MCF 10A (cell line): ENCODE measurements at regions of chr4 and their contacts with region 1.

Region 1: DNA sequence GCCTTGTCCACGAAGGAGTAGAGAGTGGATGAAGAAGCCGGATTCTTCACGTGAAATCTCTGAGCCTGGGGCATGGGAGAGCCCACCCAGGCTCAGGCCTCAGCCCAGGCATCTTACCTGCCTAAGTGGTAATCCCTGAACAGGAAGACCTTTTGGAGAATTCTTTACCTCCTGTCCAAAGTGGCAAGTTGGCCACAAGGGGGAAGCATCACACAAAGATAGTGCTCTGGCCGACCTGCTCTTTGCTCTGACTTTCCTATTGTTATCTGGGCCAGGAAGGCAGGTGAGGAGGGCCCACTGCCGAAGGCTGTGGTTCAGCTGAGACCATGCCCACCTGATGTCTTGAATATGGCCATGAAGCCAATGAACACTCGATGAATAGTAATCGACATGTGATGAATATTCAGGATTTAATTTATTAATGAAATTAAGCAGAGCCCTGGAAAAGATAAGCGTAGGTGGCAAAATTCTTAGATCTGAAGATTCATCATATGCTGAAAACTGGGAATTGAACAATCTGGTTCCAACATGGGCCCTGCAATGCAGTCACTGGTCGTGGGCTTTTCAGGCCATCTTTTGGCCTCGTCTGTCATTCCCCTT is 93.8 kb downstream of the PDGFRA start:
- DNase-seq: peak; percentile 85
- H3K4me3 Mint-ChIP-seq: no peak overlapping the region
- H3K27ac Mint-ChIP-seq: no peak overlapping the region
- H3K4me1 Mint-ChIP-seq: no peaks in the 10 kb centered on the region
- H3K27me3 Mint-ChIP-seq: no peaks in the 10 kb centered on the region
- CTCF ChIP-seq: peak; percentile 85

Region 2: DNA sequence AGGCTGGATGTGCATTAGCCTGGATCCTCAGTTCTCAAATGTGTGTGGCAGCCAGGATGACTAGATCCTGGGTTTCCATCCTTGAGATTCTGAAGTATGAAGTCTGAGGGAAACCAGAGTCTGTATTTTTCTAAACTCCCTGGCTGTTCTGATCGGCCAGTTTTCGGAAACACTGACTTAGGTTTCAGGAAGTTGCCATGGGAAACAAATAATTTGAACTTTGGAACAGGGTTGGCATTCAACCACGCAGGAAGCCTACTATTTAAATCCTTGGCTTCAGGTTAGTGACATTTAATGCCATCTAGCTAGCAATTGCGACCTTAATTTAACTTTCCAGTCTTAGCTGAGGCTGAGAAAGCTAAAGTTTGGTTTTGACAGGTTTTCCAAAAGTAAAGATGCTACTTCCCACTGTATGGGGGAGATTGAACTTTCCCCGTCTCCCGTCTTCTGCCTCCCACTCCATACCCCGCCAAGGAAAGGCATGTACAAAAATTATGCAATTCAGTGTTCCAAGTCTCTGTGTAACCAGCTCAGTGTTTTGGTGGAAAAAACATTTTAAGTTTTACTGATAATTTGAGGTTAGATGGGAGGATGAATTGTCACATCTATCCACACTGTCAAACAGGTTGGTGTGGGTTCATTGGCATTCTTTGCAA is 26.2 kb before region 1 on chr4:
- CTCF ChIA-PET with region 1: interaction called, 11 read pairs
- POLR2A ChIA-PET with region 1: no interaction called
- intact Hi-C with region 1: no loop called
- DNase-seq: no peak
- H3K4me3 Mint-ChIP-seq: no peak overlapping the region
- H3K27ac Mint-ChIP-seq: no peak overlapping the region
- H3K4me1 Mint-ChIP-seq: no peaks in the 10 kb centered on the region
- H3K27me3 Mint-ChIP-seq: no peaks in the 10 kb centered on the region
- CTCF ChIP-seq: no peak

Region 3: DNA sequence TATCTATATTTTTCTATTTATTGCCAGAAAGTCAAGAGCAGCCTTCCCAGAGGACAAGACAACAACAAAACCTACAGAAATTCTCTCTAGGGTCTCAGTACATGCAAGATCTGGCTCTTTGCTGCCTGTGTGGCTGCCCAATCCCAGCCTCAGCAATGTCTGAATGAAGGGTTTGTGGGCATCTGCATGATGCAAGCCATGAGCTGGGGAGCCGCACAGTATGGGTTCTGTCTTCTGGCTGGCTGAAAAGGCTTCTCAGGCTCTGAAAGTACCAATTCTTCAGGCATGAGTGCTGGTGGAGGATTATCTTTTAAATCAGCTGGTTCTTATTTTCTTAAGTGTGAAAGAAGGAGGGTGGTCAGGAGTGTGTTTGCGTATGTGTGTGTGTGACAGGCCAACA is 10.7 kb after region 1 on chr4:
- CTCF ChIA-PET with region 1: interaction called, 10 read pairs
- POLR2A ChIA-PET with region 1: no interaction called
- intact Hi-C with region 1: no loop called
- DNase-seq: no peak
- H3K4me3 Mint-ChIP-seq: no peak overlapping the region
- H3K27ac Mint-ChIP-seq: no peak overlapping the region
- H3K4me1 Mint-ChIP-seq: no peaks in the 10 kb centered on the region
- H3K27me3 Mint-ChIP-seq: no peaks in the 10 kb centered on the region
- CTCF ChIP-seq: no peak

Region 4: GRCh38 chr4:54683616-54684346 is 360.9 kb after region 1 on chr4:
- CTCF ChIA-PET with region 1: interaction called, 5 read pairs
- POLR2A ChIA-PET with region 1: no interaction called
- intact Hi-C with region 1: loop called (anchors 5 kb)
- DNase-seq: peak; percentile 72
- H3K4me3 Mint-ChIP-seq: no peak overlapping the region
- H3K27ac Mint-ChIP-seq: no peak overlapping the region
- H3K4me1 Mint-ChIP-seq: peaks cover 5% of the 10 kb centered on the region
- H3K27me3 Mint-ChIP-seq: no peaks in the 10 kb centered on the region
- CTCF ChIP-seq: no peak

Region 5: DNA sequence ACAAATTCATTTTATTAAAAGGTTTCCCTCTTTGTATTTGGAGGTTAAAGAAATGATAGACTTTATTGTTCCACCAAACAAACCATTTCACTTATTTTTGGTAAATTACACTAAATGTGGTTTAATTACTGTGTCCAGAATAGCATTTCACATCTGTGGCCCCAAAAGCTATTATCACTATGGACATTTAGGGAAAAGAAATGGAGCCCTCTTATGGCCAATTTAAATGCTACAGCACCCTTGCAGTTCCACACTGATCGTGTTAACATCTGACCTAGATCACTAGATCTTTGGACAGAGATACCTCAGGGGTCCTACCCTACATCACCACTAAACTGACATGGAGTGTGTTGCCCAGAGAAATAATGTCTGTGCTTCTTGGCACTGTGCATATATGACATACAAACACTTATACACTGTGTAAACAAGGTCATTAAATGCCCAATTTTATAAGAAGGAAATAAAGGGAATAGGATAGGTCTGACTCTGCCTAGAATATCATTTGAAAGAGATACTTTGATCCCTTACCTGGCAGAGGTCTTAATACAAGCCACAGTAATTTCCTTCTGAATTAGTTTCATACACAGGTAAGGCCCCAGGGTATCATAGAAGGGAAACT is 638.5 kb after region 1 on chr4:
- CTCF ChIA-PET with region 1: interaction called, 54 read pairs
- POLR2A ChIA-PET with region 1: interaction called, 3 read pairs
- intact Hi-C with region 1: loop called (anchors 1 kb)
- DNase-seq: peak; percentile 54
- H3K4me3 Mint-ChIP-seq: no peak overlapping the region
- H3K27ac Mint-ChIP-seq: no peak overlapping the region
- H3K4me1 Mint-ChIP-seq: no peaks in the 10 kb centered on the region
- H3K27me3 Mint-ChIP-seq: peaks cover 24% of the 10 kb centered on the region
- CTCF ChIP-seq: peak; percentile 54